ENCODE measurements at regions of chr17 and their contacts with region 1.

Region 1: GRCh38 chr17:59004338-59005111 is 102.2 kb downstream of the TRIM37 start:
- DNase-seq: peak; percentile 49 to 84 (median 66)
- ATAC-seq: peak; percentile 57
- H3K4me3 ChIP-seq: no peak overlapping the region
- H3K4me3 Mint-ChIP-seq: peak overlapping the region; percentile 45
- H3K27ac ChIP-seq: no peak overlapping the region
- H3K27ac Mint-ChIP-seq: peak overlapping the region; percentile 81
- H3K4me1 ChIP-seq: peaks cover 9% of the 10 kb centered on the region
- H3K4me1 Mint-ChIP-seq: peaks cover 12% of the 10 kb centered on the region
- H3K27me3 ChIP-seq: no peaks in the 10 kb centered on the region
- H3K27me3 Mint-ChIP-seq: no peaks in the 10 kb centered on the region
- CTCF ChIP-seq: peak; percentile 95

Region 2: DNA sequence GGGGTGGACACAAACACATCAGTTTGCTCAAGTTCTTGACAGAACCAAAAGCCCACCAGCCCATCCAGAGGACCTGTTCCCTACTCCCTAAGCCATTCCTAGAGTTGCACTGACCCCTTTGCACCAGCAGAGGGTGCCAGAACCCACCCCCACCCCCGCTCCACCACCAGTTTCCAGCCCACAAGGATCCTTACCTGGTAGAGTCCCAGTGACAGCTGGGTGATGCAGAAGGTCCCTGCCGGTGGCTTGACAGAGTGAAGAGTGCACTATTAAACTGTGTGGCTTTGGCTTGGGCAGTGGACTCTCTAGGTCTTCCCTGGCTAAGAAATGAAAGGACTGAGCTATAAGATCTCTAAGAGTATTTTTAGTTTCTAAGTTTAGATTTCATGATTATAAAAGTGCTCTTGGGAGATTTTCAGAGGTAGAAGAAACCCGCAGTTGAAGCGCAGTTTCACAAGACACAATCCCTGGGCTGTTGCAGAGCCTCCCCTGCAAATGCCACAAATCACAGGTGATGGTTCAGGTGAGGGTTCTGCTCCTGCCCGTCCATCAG is 416.7 kb before region 1 on chr17:
- CTCF ChIA-PET with region 1: interaction called, 15 read pairs
- POLR2A ChIA-PET with region 1: interaction called, 5 read pairs
- intact Hi-C with region 1: loop called (anchors 1 to 2 kb)
- DNase-seq: peak; percentile 33 to 81 (median 47)
- ATAC-seq: peak; percentile 92
- H3K4me3 ChIP-seq: no peak overlapping the region
- H3K4me3 Mint-ChIP-seq: no peak overlapping the region
- H3K27ac ChIP-seq: no peak overlapping the region
- H3K27ac Mint-ChIP-seq: no peak overlapping the region
- H3K4me1 ChIP-seq: peaks cover 5% of the 10 kb centered on the region
- H3K4me1 Mint-ChIP-seq: peaks cover 4% of the 10 kb centered on the region
- H3K27me3 ChIP-seq: no peaks in the 10 kb centered on the region
- H3K27me3 Mint-ChIP-seq: peaks cover 8% of the 10 kb centered on the region
- CTCF ChIP-seq: peak; percentile 91

Region 3: GRCh38 chr17:58710936-58711775 is 293.4 kb before region 1 on chr17:
- CTCF ChIA-PET with region 1: interaction called, 24 read pairs
- POLR2A ChIA-PET with region 1: interaction called, 4 read pairs
- intact Hi-C with region 1: loop called (anchors 1 kb)
- DNase-seq: peak in 9 of 14 experiments; percentile 3 to 70 (median 38)
- ATAC-seq: no peak
- H3K4me3 ChIP-seq: no peak overlapping the region
- H3K4me3 Mint-ChIP-seq: no peak overlapping the region
- H3K27ac ChIP-seq: no peak overlapping the region
- H3K27ac Mint-ChIP-seq: no peak overlapping the region
- H3K4me1 ChIP-seq: no peaks in the 10 kb centered on the region
- H3K4me1 Mint-ChIP-seq: no peaks in the 10 kb centered on the region
- H3K27me3 ChIP-seq: no peaks in the 10 kb centered on the region
- H3K27me3 Mint-ChIP-seq: no peaks in the 10 kb centered on the region
- CTCF ChIP-seq: peak; percentile 85

Region 4: DNA sequence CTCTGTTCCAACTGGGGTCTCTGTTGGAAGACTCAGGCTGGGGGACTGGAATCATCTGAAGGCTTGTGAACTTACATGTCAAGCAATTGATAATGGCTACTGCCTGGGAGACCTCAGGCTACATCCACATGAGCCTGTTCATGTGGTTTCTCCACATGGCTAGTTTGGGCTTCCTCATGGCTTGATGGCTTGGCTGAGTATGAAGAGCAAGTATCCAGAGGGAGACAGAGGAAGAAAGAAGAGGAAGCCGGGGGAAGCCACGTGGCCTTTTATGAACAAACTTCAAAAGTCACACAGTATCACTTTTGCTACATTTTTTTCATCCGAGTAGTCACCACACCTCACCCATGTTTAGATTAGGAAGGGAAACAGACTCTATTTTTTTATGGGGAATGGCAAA is 56.7 kb before region 1 on chr17:
- CTCF ChIA-PET with region 1: no interaction called
- POLR2A ChIA-PET with region 1: no interaction called
- intact Hi-C with region 1: no loop called
- DNase-seq: peak in 1 of 14 experiments; percentile 5
- ATAC-seq: no peak
- H3K4me3 ChIP-seq: no peak overlapping the region
- H3K4me3 Mint-ChIP-seq: no peak overlapping the region
- H3K27ac ChIP-seq: no peak overlapping the region
- H3K27ac Mint-ChIP-seq: no peak overlapping the region
- H3K4me1 ChIP-seq: no peaks in the 10 kb centered on the region
- H3K4me1 Mint-ChIP-seq: no peaks in the 10 kb centered on the region
- H3K27me3 ChIP-seq: no peaks in the 10 kb centered on the region
- H3K27me3 Mint-ChIP-seq: peaks cover 24% of the 10 kb centered on the region
- CTCF ChIP-seq: no peak

Measured in CD4-positive, alpha-beta T cell (primary cell).